Mucosa of descending colon (tissue), 3 donors: ENCODE measurements at regions of chr2 and their contacts with region 1.

Region 1: GRCh38 chr2:11692966-11693521 is 23.0 kb upstream of the NTSR2 start:
- DNase-seq: peak in 2 of 3 donors; percentile 38 to 92
- ATAC-seq: peak; percentile 87
- H3K4me3 ChIP-seq: no peak overlapping the region
- H3K4me1 ChIP-seq: peaks cover 8% of the 10 kb centered on the region
- CTCF ChIP-seq: peak; percentile 58

Region 2: GRCh38 chr2:11534744-11535484 is 158.1 kb before region 1 on chr2:
- intact Hi-C with region 1: no loop called
- DNase-seq: no peak
- ATAC-seq: no peak
- H3K4me3 ChIP-seq: no peak overlapping the region
- H3K4me1 ChIP-seq: no peaks in the 10 kb centered on the region
- CTCF ChIP-seq: no peak

Region 3: GRCh38 chr2:11656668-11657101 is 36.4 kb before region 1 on chr2:
- intact Hi-C with region 1: no loop called
- DNase-seq: peak in 2 of 3 donors; percentile 62 to 78
- ATAC-seq: peak; percentile 86
- H3K4me3 ChIP-seq: no peak overlapping the region
- H3K4me1 ChIP-seq: no peaks in the 10 kb centered on the region
- CTCF ChIP-seq: no peak

Region 4: GRCh38 chr2:11778923-11779757 is 86.1 kb after region 1 on chr2:
- intact Hi-C with region 1: loop called (anchors 5 kb)
- DNase-seq: peak; percentile 87 to 88 (median 87)
- ATAC-seq: peak; percentile 96
- H3K4me3 ChIP-seq: no peak overlapping the region
- H3K4me1 ChIP-seq: peaks cover 9% of the 10 kb centered on the region
- CTCF ChIP-seq: peak; percentile 79

Region 5: GRCh38 chr2:11784747-11785610 is 91.9 kb after region 1 on chr2:
- intact Hi-C with region 1: loop called in 1 of 2 experiments (anchors 5 kb)
- DNase-seq: peak in 2 of 3 donors; percentile 57 to 62
- ATAC-seq: peak; percentile 77
- H3K4me3 ChIP-seq: no peak overlapping the region
- H3K4me1 ChIP-seq: no peaks in the 10 kb centered on the region
- CTCF ChIP-seq: peak; percentile 77

Region 6: GRCh38 chr2:11955314-11955713 is 262.3 kb after region 1 on chr2:
- intact Hi-C with region 1: no loop called
- DNase-seq: no peak
- ATAC-seq: no peak
- H3K4me3 ChIP-seq: no peak overlapping the region
- H3K4me1 ChIP-seq: no peaks in the 10 kb centered on the region
- CTCF ChIP-seq: no peak